ENCODE measurements at regions of chrX and their contacts with region 1.

Region 1: GRCh38 chrX:25144043-25144940 is 128.5 kb upstream of the ARX start:
- DNase-seq: peak; percentile 47 to 80 (median 70)
- H3K4me3 ChIP-seq: no peak overlapping the region
- H3K27ac ChIP-seq: no peak overlapping the region
- H3K4me1 ChIP-seq: no peaks in the 10 kb centered on the region
- H3K27me3 ChIP-seq: peaks cover 13% of the 10 kb centered on the region
- CTCF ChIP-seq: peak; percentile 54 to 87 (median 67)
- POLR2A ChIP-seq: no peak

Region 2: GRCh38 chrX:24607616-24608015 is 536.7 kb before region 1 on chrX:
- intact Hi-C with region 1: no loop called
- DNase-seq: peak in 1 of 7 donors; percentile 1
- H3K4me3 ChIP-seq: no peak overlapping the region
- H3K27ac ChIP-seq: no peak overlapping the region
- H3K4me1 ChIP-seq: no peaks in the 10 kb centered on the region
- H3K27me3 ChIP-seq: peaks cover 17% of the 10 kb centered on the region
- CTCF ChIP-seq: no peak
- POLR2A ChIP-seq: no peak

Region 3: GRCh38 chrX:24732766-24733500 is 411.4 kb before region 1 on chrX:
- intact Hi-C with region 1: no loop called
- DNase-seq: no peak
- H3K4me3 ChIP-seq: no peak overlapping the region
- H3K27ac ChIP-seq: no peak overlapping the region
- H3K4me1 ChIP-seq: no peaks in the 10 kb centered on the region
- H3K27me3 ChIP-seq: no peaks in the 10 kb centered on the region
- CTCF ChIP-seq: no peak
- POLR2A ChIP-seq: no peak

Region 4: GRCh38 chrX:24759786-24760185 is 384.5 kb before region 1 on chrX:
- intact Hi-C with region 1: loop called in 1 of 2 experiments (anchors 5 kb)
- DNase-seq: no peak
- H3K4me3 ChIP-seq: no peak overlapping the region
- H3K27ac ChIP-seq: no peak overlapping the region
- H3K4me1 ChIP-seq: no peaks in the 10 kb centered on the region
- H3K27me3 ChIP-seq: no peaks in the 10 kb centered on the region
- CTCF ChIP-seq: no peak
- POLR2A ChIP-seq: no peak

Region 5: DNA sequence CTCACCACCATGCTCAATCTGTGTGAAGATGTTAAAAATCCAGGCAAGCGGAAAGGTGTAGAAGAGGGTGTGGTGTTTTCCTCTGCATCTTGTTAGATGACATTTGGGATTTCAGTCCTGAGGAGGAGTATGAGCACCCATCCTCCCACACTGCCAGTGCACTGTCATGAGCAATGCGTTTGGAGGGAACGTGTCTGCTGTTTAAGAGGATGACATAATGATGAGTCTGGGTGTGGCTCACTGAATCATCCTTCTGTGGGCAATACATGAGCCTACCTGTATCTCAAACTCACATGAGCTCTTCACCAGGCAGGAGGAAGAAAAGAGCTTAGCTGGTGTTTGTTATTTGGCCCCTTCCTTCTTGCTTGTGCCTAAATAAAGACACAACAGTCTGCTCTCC is 60.6 kb before region 1 on chrX:
- intact Hi-C with region 1: no loop called
- DNase-seq: no peak
- H3K4me3 ChIP-seq: no peak overlapping the region
- H3K27ac ChIP-seq: no peak overlapping the region
- H3K4me1 ChIP-seq: no peaks in the 10 kb centered on the region
- H3K27me3 ChIP-seq: peaks cover 5% of the 10 kb centered on the region
- CTCF ChIP-seq: no peak
- POLR2A ChIP-seq: no peak

Region 6: GRCh38 chrX:25389266-25389665 is 245.0 kb after region 1 on chrX:
- intact Hi-C with region 1: no loop called
- DNase-seq: no peak
- H3K4me3 ChIP-seq: no peak overlapping the region
- H3K27ac ChIP-seq: no peak overlapping the region
- H3K4me1 ChIP-seq: no peaks in the 10 kb centered on the region
- H3K27me3 ChIP-seq: no peaks in the 10 kb centered on the region
- CTCF ChIP-seq: no peak
- POLR2A ChIP-seq: no peak

Measured in adrenal gland (tissue), 19 donors.